ENCODE measurements at regions of chr14 and their contacts with region 1.

Region 1: GRCh38 chr14:23727566-23728335 is 91.6 kb downstream of the DHRS2 start:
- DNase-seq: no peak
- H3K4me3 ChIP-seq: no peak overlapping the region
- H3K27ac ChIP-seq: no peak overlapping the region
- H3K4me1 ChIP-seq: no peaks in the 10 kb centered on the region
- H3K27me3 ChIP-seq: no peaks in the 10 kb centered on the region
- CTCF ChIP-seq: peak; percentile 40

Region 2: GRCh38 chr14:23588884-23589598 is 138.7 kb before region 1 on chr14:
- intact Hi-C with region 1: loop called (anchors 10 kb)
- DNase-seq: peak; percentile 93
- H3K4me3 ChIP-seq: no peak overlapping the region
- H3K27ac ChIP-seq: no peak overlapping the region
- H3K4me1 ChIP-seq: no peaks in the 10 kb centered on the region
- H3K27me3 ChIP-seq: no peaks in the 10 kb centered on the region
- CTCF ChIP-seq: peak; percentile 77

Region 3: DNA sequence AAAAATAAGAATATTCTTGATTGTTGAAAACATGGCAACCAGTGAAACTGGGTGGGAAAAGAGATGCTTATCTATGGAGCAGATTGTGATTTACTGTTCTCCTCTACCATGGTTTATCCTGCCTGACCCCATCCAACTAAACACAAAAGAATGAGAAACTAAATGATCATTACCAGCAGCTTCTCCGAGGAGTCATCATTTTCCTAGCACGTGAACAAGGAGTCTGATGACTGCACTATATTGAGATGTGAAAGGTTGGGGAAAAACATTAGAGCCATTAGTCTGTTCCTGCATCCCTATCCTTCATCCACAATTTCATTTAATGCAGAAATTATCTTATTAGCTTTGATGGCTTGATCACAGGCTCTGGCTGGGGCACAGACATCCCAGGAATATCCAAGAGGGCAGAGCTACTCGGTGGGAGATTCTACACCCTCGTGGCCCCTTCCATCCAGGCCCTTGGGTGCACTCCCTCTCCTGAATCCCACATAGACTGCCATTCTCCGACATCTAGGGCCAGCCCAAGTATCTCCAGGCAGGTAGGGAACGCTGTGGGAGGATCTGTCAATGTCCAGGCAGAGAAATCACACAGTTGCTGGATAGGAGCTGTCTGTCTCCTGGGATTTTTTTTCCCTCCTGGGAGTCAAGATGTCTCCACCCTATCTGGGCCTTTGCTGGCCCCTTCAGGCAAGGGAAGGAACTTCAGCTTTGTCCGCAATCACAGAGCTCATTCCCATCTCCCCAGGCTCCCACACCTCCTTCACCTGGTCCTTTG is 182.5 kb after region 1 on chr14:
- intact Hi-C with region 1: loop called (anchors 5 kb)
- DNase-seq: peak; percentile 64
- H3K4me3 ChIP-seq: no peak overlapping the region
- H3K27ac ChIP-seq: no peak overlapping the region
- H3K4me1 ChIP-seq: no peaks in the 10 kb centered on the region
- H3K27me3 ChIP-seq: no peaks in the 10 kb centered on the region
- CTCF ChIP-seq: peak; percentile 73

Region 4: GRCh38 chr14:23929822-23930294 is 202.1 kb after region 1 on chr14:
- intact Hi-C with region 1: loop called (anchors 5 kb)
- DNase-seq: peak; percentile 88
- H3K4me3 ChIP-seq: no peak overlapping the region
- H3K27ac ChIP-seq: no peak overlapping the region
- H3K4me1 ChIP-seq: no peaks in the 10 kb centered on the region
- H3K27me3 ChIP-seq: no peaks in the 10 kb centered on the region
- CTCF ChIP-seq: peak; percentile 90